ENCODE measurements at regions of chr2 and their contacts with region 1.

Region 1: GRCh38 chr2:88919087-88919738 is 227.7 kb downstream of the RPIA start:
- DNase-seq: no peak
- ATAC-seq: no peak
- H3K4me3 ChIP-seq: no peak overlapping the region
- H3K27ac ChIP-seq: no peak overlapping the region
- H3K4me1 ChIP-seq: no peaks in the 10 kb centered on the region
- H3K27me3 ChIP-seq: peaks cover 0 to 4% (median 0%) of the 10 kb centered on the region in 7 donors
- CTCF ChIP-seq: peak in 8 of 9 donors; percentile 18 to 71 (median 60)

Region 2: GRCh38 chr2:88874063-88874657 is 45.1 kb before region 1 on chr2:
- intact Hi-C with region 1: loop called in 2 of 10 experiments (anchors 1 to 5 kb)
- DNase-seq: peak in 1 of 2 donors; percentile 47
- ATAC-seq: peak in 6 of 8 donors; percentile 53 to 73 (median 62)
- H3K4me3 ChIP-seq: no peak overlapping the region
- H3K27ac ChIP-seq: no peak overlapping the region
- H3K4me1 ChIP-seq: peaks cover 0 to 3% (median 0%) of the 10 kb centered on the region in 9 donors
- H3K27me3 ChIP-seq: peaks cover 0 to 33% (median 13%) of the 10 kb centered on the region in 7 donors
- CTCF ChIP-seq: peak; percentile 59 to 88 (median 80)

Region 3: DNA sequence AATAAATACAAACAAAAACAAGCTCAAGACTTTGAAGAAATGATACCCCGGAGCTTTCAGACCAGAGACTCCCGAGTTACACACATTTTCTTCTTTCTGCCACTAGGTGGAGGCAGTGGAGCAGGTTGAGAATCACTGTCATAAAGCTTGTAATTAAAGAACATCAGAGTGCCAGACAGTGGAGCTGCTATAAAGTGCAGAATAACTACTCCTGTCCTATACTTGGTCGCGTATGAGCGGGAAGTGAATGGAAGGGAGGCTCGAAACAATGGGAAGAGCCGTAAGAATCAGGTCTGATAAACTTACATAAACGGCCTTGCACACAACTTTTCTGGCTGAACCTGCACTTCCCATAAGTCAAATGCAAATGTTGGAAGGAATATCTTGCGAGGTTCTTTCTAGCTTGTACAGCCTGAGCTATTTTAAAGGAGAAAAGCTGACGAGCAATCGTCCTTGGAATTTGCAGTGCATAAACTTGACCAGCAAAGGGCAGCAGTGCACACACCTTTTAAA is 38.7 kb before region 1 on chr2:
- intact Hi-C with region 1: loop called in 2 of 10 experiments (anchors 1 to 5 kb)
- DNase-seq: peak in 1 of 2 donors; percentile 45
- ATAC-seq: peak in 7 of 8 donors; percentile 69 to 85 (median 79)
- H3K4me3 ChIP-seq: no peak overlapping the region
- H3K27ac ChIP-seq: peak overlapping the region in 1 of 10 donors; percentile 22
- H3K4me1 ChIP-seq: peaks cover 0 to 8% (median 0%) of the 10 kb centered on the region in 9 donors
- H3K27me3 ChIP-seq: peaks cover 0 to 14% (median 0%) of the 10 kb centered on the region in 7 donors
- CTCF ChIP-seq: peak; percentile 53 to 86 (median 79)